Activated CD4-positive, alpha-beta T cell treated with anti-CD3 and anti-CD28 coated beads, Interleukin-2, amount 10 ng/mL, durations not matched to agents 24 days and 14 days (primary cell): ENCODE measurements at regions of chr21 and their contacts with region 1.

Region 1: DNA sequence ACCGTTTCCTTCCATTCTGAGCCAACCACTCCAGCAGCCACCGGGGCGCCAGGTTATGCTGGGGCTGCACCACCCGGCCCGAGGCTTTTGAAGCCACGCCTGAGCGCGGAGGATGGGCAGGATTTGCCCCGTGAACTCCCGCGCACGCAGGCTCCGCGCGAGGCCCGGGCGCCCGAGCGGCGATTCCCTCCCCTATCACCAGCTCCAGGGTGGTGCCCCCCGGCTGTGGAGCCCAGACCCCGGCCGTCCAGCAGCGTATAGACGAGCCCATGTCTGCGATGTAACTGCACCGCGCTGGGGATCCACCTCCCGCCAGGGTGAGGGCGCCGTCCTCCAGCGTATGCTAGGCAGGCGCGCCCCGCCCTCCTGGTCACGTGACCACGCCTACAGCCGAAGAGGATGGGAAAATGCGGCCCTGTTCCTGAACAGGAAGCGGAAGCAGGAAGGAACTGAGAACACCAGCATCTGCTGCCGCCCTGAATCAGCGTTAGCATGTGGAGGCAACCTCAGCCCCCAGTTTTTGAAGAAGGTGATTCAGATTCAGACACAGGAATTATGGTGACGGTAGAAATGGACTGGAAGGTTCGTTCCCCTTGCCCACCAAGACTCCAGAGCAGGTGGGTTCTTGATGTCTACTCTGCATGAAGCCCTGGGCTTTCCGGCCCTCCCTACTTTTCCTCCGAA is 46.0 kb downstream of the VPS26C start:
- DNase-seq: peak; percentile 98
- H3K4me3 Mint-ChIP-seq: peak overlapping the region; percentile 85
- H3K27ac Mint-ChIP-seq: peak overlapping the region; percentile 95
- H3K4me1 Mint-ChIP-seq: peaks cover 43% of the 10 kb centered on the region
- H3K27me3 Mint-ChIP-seq: peaks cover 2% of the 10 kb centered on the region

Region 2: GRCh38 chr21:37060296-37060695 is 160.8 kb before region 1 on chr21:
- intact Hi-C with region 1: no loop called
- DNase-seq: no peak
- H3K4me3 Mint-ChIP-seq: no peak overlapping the region
- H3K27ac Mint-ChIP-seq: no peak overlapping the region
- H3K4me1 Mint-ChIP-seq: peaks cover 1% of the 10 kb centered on the region
- H3K27me3 Mint-ChIP-seq: peaks cover under 1% of the 10 kb centered on the region

Region 3: GRCh38 chr21:37257967-37258877 is 37.1 kb after region 1 on chr21:
- intact Hi-C with region 1: loop called (anchors 1 kb)
- DNase-seq: peak; percentile 96
- H3K4me3 Mint-ChIP-seq: peak overlapping the region; percentile 97
- H3K27ac Mint-ChIP-seq: peak overlapping the region; percentile 99
- H3K4me1 Mint-ChIP-seq: peaks cover 39% of the 10 kb centered on the region
- H3K27me3 Mint-ChIP-seq: peaks cover 2% of the 10 kb centered on the region

Region 4: DNA sequence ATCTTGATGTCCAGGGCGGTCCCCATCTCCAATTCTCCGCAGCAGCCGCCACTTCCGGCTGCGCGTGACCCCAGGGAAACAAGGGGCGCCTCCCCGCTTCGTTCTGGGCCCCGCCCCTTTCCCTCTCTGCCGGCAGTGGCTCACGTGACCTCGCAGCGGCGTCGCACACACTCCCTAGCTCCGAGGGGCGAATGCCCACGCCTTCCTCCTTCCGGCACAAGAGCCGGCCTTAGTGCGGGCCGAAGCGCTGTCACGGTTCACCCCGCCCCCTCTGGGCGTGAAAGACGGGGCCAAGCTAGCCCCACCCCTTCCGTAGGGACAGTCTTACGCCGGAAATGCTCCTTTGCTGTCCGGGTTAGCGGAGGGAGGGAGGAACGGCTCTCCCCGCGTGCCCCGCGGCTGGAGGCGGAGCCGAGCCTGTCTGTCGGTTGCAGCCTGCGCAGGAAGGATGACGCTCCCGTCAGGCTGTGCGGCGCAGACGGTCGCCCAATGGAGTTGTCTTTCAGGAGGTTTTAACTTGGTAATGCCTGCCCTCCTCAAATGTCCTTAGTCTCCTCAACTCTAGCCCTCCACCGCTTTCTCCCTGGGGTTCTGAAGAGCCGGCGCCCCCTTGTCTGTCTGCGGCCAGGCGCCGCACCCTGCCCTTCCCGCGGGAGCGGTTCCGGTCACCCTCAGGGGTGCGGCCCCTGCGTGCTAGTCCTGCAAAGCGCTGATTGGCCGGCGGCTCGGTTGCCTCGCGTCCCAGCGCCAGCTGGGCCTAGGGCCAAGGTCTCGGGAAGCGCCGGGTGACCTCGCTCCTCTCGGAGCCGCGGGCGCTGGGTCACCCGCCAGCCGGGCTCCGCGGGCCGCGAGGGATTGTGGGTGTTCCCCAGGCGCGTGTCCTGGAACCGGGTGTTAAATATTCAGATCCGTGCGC is 46.4 kb after region 1 on chr21 and contains the start of gene VPS26C:
- intact Hi-C with region 1: loop called (anchors 1 kb)
- DNase-seq: peak; percentile 100
- H3K4me3 Mint-ChIP-seq: peak within 1 kb of the TSS; percentile 97
- H3K27ac Mint-ChIP-seq: peak within 1 kb of the TSS; percentile 98
- H3K4me1 Mint-ChIP-seq: peaks cover 34% of the 10 kb centered on the region
- H3K27me3 Mint-ChIP-seq: peaks cover 2% of the 10 kb centered on the region
- total RNA-seq, gene VPS26C: 52.8 and 60.0 TPM in 2 replicates

Region 5: GRCh38 chr21:37463083-37463801 is 242.1 kb after region 1 on chr21:
- intact Hi-C with region 1: loop called (anchors 5 kb)
- DNase-seq: peak; percentile 77
- H3K4me3 Mint-ChIP-seq: no peak overlapping the region
- H3K27ac Mint-ChIP-seq: peak overlapping the region; percentile 48
- H3K4me1 Mint-ChIP-seq: peaks cover 46% of the 10 kb centered on the region
- H3K27me3 Mint-ChIP-seq: no peaks in the 10 kb centered on the region

Region 6: GRCh38 chr21:37563641-37564340 is 342.7 kb after region 1 on chr21:
- intact Hi-C with region 1: loop called (anchors 1 kb)
- DNase-seq: peak; percentile 98
- H3K4me3 Mint-ChIP-seq: peak overlapping the region; percentile 94
- H3K27ac Mint-ChIP-seq: peak overlapping the region; percentile 100
- H3K4me1 Mint-ChIP-seq: peaks cover 23% of the 10 kb centered on the region
- H3K27me3 Mint-ChIP-seq: peaks cover 9% of the 10 kb centered on the region